Thyroid gland (tissue), 4 donors: ENCODE measurements at regions of chr2 and their contacts with region 1.

Region 1: GRCh38 chr2:232444409-232445148 is 11.4 kb upstream of the ALPI start:
- DNase-seq: peak; percentile 21 to 42
- H3K4me3 ChIP-seq: no peak overlapping the region
- H3K27ac ChIP-seq: no peak overlapping the region
- H3K4me1 ChIP-seq: no peaks in the 10 kb centered on the region
- H3K27me3 ChIP-seq: no peaks in the 10 kb centered on the region
- CTCF ChIP-seq: peak in 3 of 6 experiments; percentile 13 to 45 (median 17)
- POLR2A ChIP-seq: no peak

Region 2: GRCh38 chr2:231905026-231905425 is 539.6 kb before region 1 on chr2:
- intact Hi-C with region 1: loop called (anchors 5 kb)
- DNase-seq: peak; percentile 94
- H3K4me3 ChIP-seq: no peak overlapping the region
- H3K27ac ChIP-seq: peak overlapping the region; percentile 53 to 76 (median 64)
- H3K4me1 ChIP-seq: peaks cover 17 to 23% of the 10 kb centered on the region in 2 donors
- H3K27me3 ChIP-seq: no peaks in the 10 kb centered on the region
- CTCF ChIP-seq: peak in 1 of 6 experiments; percentile 7
- POLR2A ChIP-seq: peak in 1 of 2 donors; percentile 9

Region 3: GRCh38 chr2:232521959-232522622 is 77.5 kb after region 1 on chr2:
- intact Hi-C with region 1: loop called (anchors 5 kb)
- DNase-seq: peak; percentile 43 to 47
- H3K4me3 ChIP-seq: no peak overlapping the region
- H3K27ac ChIP-seq: no peak overlapping the region
- H3K4me1 ChIP-seq: peaks cover 6 to 25% of the 10 kb centered on the region in 2 donors
- H3K27me3 ChIP-seq: peaks cover 23% of the 10 kb centered on the region
- CTCF ChIP-seq: peak in 5 of 6 experiments; percentile 69 to 94 (median 88)
- POLR2A ChIP-seq: no peak

Region 4: GRCh38 chr2:232563580-232563979 is 119.0 kb after region 1 on chr2:
- intact Hi-C with region 1: no loop called
- DNase-seq: no peak
- H3K4me3 ChIP-seq: no peak overlapping the region
- H3K27ac ChIP-seq: no peak overlapping the region
- H3K4me1 ChIP-seq: peaks cover 0 to 10% of the 10 kb centered on the region in 2 donors
- H3K27me3 ChIP-seq: no peaks in the 10 kb centered on the region
- CTCF ChIP-seq: no peak
- POLR2A ChIP-seq: no peak

Region 5: DNA sequence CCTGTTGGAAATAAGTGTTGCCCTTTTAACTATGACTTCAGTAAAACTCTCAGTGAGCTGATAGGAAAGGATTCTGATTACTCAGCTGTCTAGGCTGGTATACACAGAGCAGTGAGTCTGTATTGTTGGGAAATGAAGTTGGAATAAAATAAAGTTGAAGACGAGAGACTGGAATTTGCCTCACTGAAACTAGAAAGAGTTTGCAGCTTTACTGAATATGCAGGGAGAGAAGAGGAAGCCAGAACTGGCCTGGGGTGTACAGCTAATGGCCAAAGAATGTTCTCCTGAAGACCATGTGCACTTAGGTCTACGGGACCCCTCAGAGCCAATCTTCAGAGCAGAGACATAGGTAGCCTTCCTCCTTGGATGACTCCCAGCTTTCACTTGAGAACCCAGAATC is 132.4 kb after region 1 on chr2:
- intact Hi-C with region 1: no loop called
- DNase-seq: no peak
- H3K4me3 ChIP-seq: no peak overlapping the region
- H3K27ac ChIP-seq: no peak overlapping the region
- H3K4me1 ChIP-seq: peaks cover 12 to 18% of the 10 kb centered on the region in 2 donors
- H3K27me3 ChIP-seq: no peaks in the 10 kb centered on the region
- CTCF ChIP-seq: no peak
- POLR2A ChIP-seq: no peak